Heart left ventricle (tissue), 16 donors: ENCODE measurements at regions of chr6 and their contacts with region 1.

Region 1: GRCh38 chr6:82270881-82271645 is 23.5 kb upstream of the IBTK start:
- DNase-seq: no peak
- ATAC-seq: no peak
- H3K4me3 ChIP-seq: no peak overlapping the region
- H3K27ac ChIP-seq: no peak overlapping the region
- H3K4me1 ChIP-seq: no peaks in the 10 kb centered on the region
- H3K27me3 ChIP-seq: no peaks in the 10 kb centered on the region
- CTCF ChIP-seq: peak; percentile 52 to 74 (median 62)
- POLR2A ChIP-seq: no peak

Region 2: DNA sequence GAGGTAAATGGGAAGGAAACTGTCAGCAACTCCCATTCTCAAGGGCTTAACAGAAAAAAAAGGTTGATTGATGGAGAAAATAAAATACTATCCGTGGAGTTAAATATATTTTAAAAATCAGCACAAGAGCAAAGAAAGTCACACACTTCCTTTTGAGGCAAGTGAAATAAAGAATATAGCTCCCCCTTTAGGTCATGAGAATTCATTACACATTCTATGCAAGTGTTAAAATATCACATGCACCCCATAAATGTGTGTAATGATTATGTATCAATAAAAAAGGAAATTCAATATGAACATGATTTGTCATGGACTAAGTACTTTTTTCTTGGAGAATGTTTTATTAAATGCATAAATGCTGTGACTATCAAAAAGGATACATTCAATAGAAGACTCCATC is 441.8 kb after region 1 on chr6:
- intact Hi-C with region 1: loop called in 2 of 10 experiments (anchors 5 to 10 kb)
- DNase-seq: no peak
- ATAC-seq: no peak
- H3K4me3 ChIP-seq: no peak overlapping the region
- H3K27ac ChIP-seq: no peak overlapping the region
- H3K4me1 ChIP-seq: peaks cover 0 to 3% (median 0%) of the 10 kb centered on the region in 12 donors
- H3K27me3 ChIP-seq: no peaks in the 10 kb centered on the region
- CTCF ChIP-seq: peak in 8 of 12 donors; percentile 13 to 43 (median 30)
- POLR2A ChIP-seq: no peak

Region 3: GRCh38 chr6:83051377-83052172 is 780.5 kb after region 1 on chr6:
- intact Hi-C with region 1: loop called in 9 of 10 experiments (anchors 2 to 5 kb)
- DNase-seq: no peak
- ATAC-seq: no peak
- H3K4me3 ChIP-seq: no peak overlapping the region
- H3K27ac ChIP-seq: no peak overlapping the region
- H3K4me1 ChIP-seq: peaks cover 0 to 6% (median 0%) of the 10 kb centered on the region in 12 donors
- H3K27me3 ChIP-seq: no peaks in the 10 kb centered on the region
- CTCF ChIP-seq: no peak
- POLR2A ChIP-seq: no peak